ENCODE measurements at regions of chr14 and their contacts with region 1.

Region 1: DNA sequence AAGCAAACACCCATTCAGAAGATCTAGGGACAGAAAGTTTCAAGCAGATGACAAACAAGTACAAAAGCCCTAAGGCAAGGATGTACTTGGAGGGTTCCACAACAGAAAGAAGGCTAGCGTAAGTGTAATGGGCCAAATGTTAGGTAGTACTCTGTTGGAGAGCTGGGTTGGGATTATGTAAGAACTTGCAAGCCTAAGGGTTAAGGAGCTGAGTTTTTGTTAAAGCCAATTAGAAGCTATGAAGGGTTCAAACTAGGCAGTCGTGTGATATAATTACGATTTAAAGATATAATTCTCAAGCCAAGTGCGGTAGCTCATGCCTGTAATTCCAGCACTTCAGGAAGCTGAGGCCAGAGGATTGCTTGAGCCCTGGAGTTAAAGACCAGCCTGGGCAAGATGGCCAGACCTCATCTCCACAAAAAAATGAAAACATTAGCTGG is 41.3 kb downstream of the HECTD1 start:
- DNase-seq: no peak
- H3K4me3 ChIP-seq: no peak overlapping the region
- H3K27ac ChIP-seq: peak overlapping the region; percentile 67
- H3K4me1 ChIP-seq: peaks cover 24% of the 10 kb centered on the region
- H3K27me3 ChIP-seq: no peaks in the 10 kb centered on the region
- CTCF ChIP-seq: no peak

Region 2: DNA sequence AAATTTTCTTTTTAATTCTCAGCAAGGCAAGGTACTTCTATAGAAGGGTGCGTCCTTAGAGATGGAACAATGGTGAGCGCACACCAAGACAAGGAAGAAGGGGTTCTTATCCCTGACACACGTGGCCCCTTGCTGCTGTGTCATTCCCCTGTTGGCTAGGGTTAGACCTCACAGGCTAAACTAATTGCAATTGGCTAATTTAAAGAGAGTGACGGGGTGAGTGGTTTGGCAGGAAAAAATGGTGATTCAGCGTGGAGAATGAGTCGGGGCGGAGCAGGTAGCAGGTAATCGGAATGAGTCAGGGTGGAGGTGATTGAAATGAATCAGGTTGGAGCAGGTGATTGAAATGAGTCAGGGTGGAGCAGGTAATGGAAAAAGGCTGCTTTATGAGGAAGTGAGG is 77.6 kb after region 1 on chr14:
- CTCF ChIA-PET with region 1: no interaction called
- POLR2A ChIA-PET with region 1: interaction called, 12 read pairs
- intact Hi-C with region 1: no loop called
- DNase-seq: peak; percentile 75 to 94
- H3K4me3 ChIP-seq: peak overlapping the region; percentile 31; the same call in 1 of the 2 replicates
- H3K27ac ChIP-seq: peak overlapping the region; percentile 97
- H3K4me1 ChIP-seq: peaks cover 18% of the 10 kb centered on the region
- H3K27me3 ChIP-seq: no peaks in the 10 kb centered on the region
- CTCF ChIP-seq: no peak

Measured in PC-9 (cell line).